CD4-positive, alpha-beta memory T cell (primary cell): ENCODE measurements at regions of chr1 and their contacts with region 1.

Region 1: GRCh38 chr1:222465211-222466041 is 82.5 kb downstream of the HHIPL2 start:
- DNase-seq: peak; percentile 66 to 84 (median 79)
- H3K4me3 ChIP-seq: peak overlapping the region; percentile 62 to 73
- H3K4me3 Mint-ChIP-seq: peak overlapping the region; percentile 82 to 95 (median 89)
- H3K27ac ChIP-seq: peak overlapping the region; percentile 31
- H3K27ac Mint-ChIP-seq: peak overlapping the region; percentile 62 to 95 (median 91)
- H3K4me1 ChIP-seq: peaks cover 12% of the 10 kb centered on the region
- H3K4me1 Mint-ChIP-seq: peaks cover 8 to 14% (median 11%) of the 10 kb centered on the region in 4 donors
- H3K27me3 ChIP-seq: no peaks in the 10 kb centered on the region
- H3K27me3 Mint-ChIP-seq: peaks cover 0 to 5% of the 10 kb centered on the region in 2 donors

Region 2: GRCh38 chr1:221768443-221769063 is 696.9 kb before region 1 on chr1:
- CTCF ChIA-PET with region 1: no interaction called
- POLR2A ChIA-PET with region 1: no interaction called
- intact Hi-C with region 1: no loop called
- DNase-seq: no peak
- H3K4me3 ChIP-seq: no peak overlapping the region
- H3K4me3 Mint-ChIP-seq: no peak overlapping the region
- H3K27ac ChIP-seq: no peak overlapping the region
- H3K27ac Mint-ChIP-seq: no peak overlapping the region
- H3K4me1 ChIP-seq: no peaks in the 10 kb centered on the region
- H3K4me1 Mint-ChIP-seq: peaks cover 4 to 6% (median 6%) of the 10 kb centered on the region in 4 donors
- H3K27me3 ChIP-seq: no peaks in the 10 kb centered on the region
- H3K27me3 Mint-ChIP-seq: no peaks in the 10 kb centered on the region

Region 3: GRCh38 chr1:222095606-222096475 is 369.6 kb before region 1 on chr1:
- CTCF ChIA-PET with region 1: interaction called, 59 read pairs
- POLR2A ChIA-PET with region 1: interaction called, 5 read pairs
- intact Hi-C with region 1: no loop called
- DNase-seq: peak; percentile 53 to 69 (median 61)
- H3K4me3 ChIP-seq: no peak overlapping the region
- H3K4me3 Mint-ChIP-seq: no peak overlapping the region
- H3K27ac ChIP-seq: no peak overlapping the region
- H3K27ac Mint-ChIP-seq: no peak overlapping the region
- H3K4me1 ChIP-seq: no peaks in the 10 kb centered on the region
- H3K4me1 Mint-ChIP-seq: no peaks in the 10 kb centered on the region
- H3K27me3 ChIP-seq: no peaks in the 10 kb centered on the region
- H3K27me3 Mint-ChIP-seq: no peaks in the 10 kb centered on the region

Region 4: GRCh38 chr1:222617367-222617951 is 152.0 kb after region 1 on chr1:
- CTCF ChIA-PET with region 1: interaction called, 3 read pairs
- POLR2A ChIA-PET with region 1: interaction called, 5 read pairs
- intact Hi-C with region 1: loop called (anchors 5 kb)
- DNase-seq: peak; percentile 89 to 99 (median 92)
- H3K4me3 ChIP-seq: peak overlapping the region; percentile 25 to 74
- H3K4me3 Mint-ChIP-seq: peak overlapping the region; percentile 89 to 97 (median 94)
- H3K27ac ChIP-seq: peak overlapping the region; percentile 68
- H3K27ac Mint-ChIP-seq: peak overlapping the region; percentile 90 to 98 (median 97)
- H3K4me1 ChIP-seq: peaks cover 22% of the 10 kb centered on the region
- H3K4me1 Mint-ChIP-seq: peaks cover 19 to 37% (median 28%) of the 10 kb centered on the region in 4 donors
- H3K27me3 ChIP-seq: no peaks in the 10 kb centered on the region
- H3K27me3 Mint-ChIP-seq: peaks cover 15 to 24% of the 10 kb centered on the region in 2 donors

Region 5: GRCh38 chr1:222643938-222644635 is 178.7 kb after region 1 on chr1:
- CTCF ChIA-PET with region 1: interaction called, 12 read pairs
- POLR2A ChIA-PET with region 1: interaction called, 5 read pairs
- intact Hi-C with region 1: no loop called
- DNase-seq: peak; percentile 96 to 99 (median 97)
- H3K4me3 ChIP-seq: peak overlapping the region; percentile 94 to 100
- H3K4me3 Mint-ChIP-seq: peak overlapping the region; percentile 90 to 100 (median 100)
- H3K27ac ChIP-seq: peak overlapping the region; percentile 98
- H3K27ac Mint-ChIP-seq: peak overlapping the region; percentile 97 to 100 (median 99)
- H3K4me1 ChIP-seq: peaks cover 32% of the 10 kb centered on the region
- H3K4me1 Mint-ChIP-seq: peaks cover 16 to 36% (median 28%) of the 10 kb centered on the region in 4 donors
- H3K27me3 ChIP-seq: no peaks in the 10 kb centered on the region
- H3K27me3 Mint-ChIP-seq: no peaks in the 10 kb centered on the region

Region 6: GRCh38 chr1:223081181-223081994 is 616.0 kb after region 1 on chr1:
- CTCF ChIA-PET with region 1: interaction called, 16 read pairs
- POLR2A ChIA-PET with region 1: no interaction called
- intact Hi-C with region 1: no loop called
- DNase-seq: peak; percentile 56 to 70 (median 64)
- H3K4me3 ChIP-seq: peak overlapping the region in 1 of 2 donors; percentile 44
- H3K4me3 Mint-ChIP-seq: peak overlapping the region; percentile 48 to 78 (median 68)
- H3K27ac ChIP-seq: no peak overlapping the region
- H3K27ac Mint-ChIP-seq: peak overlapping the region in 1 of 7 donors; percentile 48
- H3K4me1 ChIP-seq: peaks cover 4% of the 10 kb centered on the region
- H3K4me1 Mint-ChIP-seq: peaks cover 0 to 2% (median 0%) of the 10 kb centered on the region in 4 donors
- H3K27me3 ChIP-seq: no peaks in the 10 kb centered on the region
- H3K27me3 Mint-ChIP-seq: peaks cover 2 to 8% of the 10 kb centered on the region in 2 donors

Region 7: GRCh38 chr1:223123011-223123610 is 657.7 kb after region 1 on chr1:
- CTCF ChIA-PET with region 1: interaction called, 12 read pairs
- POLR2A ChIA-PET with region 1: no interaction called
- intact Hi-C with region 1: no loop called
- DNase-seq: no peak
- H3K4me3 ChIP-seq: peak overlapping the region in 1 of 2 donors; percentile 2
- H3K4me3 Mint-ChIP-seq: peak overlapping the region; percentile 63 to 85 (median 77)
- H3K27ac ChIP-seq: no peak overlapping the region
- H3K27ac Mint-ChIP-seq: peak overlapping the region in 1 of 7 donors; percentile 30
- H3K4me1 ChIP-seq: peaks cover 5% of the 10 kb centered on the region
- H3K4me1 Mint-ChIP-seq: peaks cover 6 to 8% (median 7%) of the 10 kb centered on the region in 4 donors
- H3K27me3 ChIP-seq: no peaks in the 10 kb centered on the region
- H3K27me3 Mint-ChIP-seq: no peaks in the 10 kb centered on the region